ENCODE measurements at regions of chr17 and their contacts with region 1.

Region 1: GRCh38 chr17:43927060-43927864 is 15.0 kb downstream of the PPY start:
- DNase-seq: peak; percentile 28
- H3K4me3 Mint-ChIP-seq: peak overlapping the region; percentile 64
- H3K27ac Mint-ChIP-seq: peak overlapping the region; percentile 6
- H3K4me1 Mint-ChIP-seq: peaks cover 27% of the 10 kb centered on the region
- H3K27me3 Mint-ChIP-seq: peaks cover 50% of the 10 kb centered on the region

Region 2: DNA sequence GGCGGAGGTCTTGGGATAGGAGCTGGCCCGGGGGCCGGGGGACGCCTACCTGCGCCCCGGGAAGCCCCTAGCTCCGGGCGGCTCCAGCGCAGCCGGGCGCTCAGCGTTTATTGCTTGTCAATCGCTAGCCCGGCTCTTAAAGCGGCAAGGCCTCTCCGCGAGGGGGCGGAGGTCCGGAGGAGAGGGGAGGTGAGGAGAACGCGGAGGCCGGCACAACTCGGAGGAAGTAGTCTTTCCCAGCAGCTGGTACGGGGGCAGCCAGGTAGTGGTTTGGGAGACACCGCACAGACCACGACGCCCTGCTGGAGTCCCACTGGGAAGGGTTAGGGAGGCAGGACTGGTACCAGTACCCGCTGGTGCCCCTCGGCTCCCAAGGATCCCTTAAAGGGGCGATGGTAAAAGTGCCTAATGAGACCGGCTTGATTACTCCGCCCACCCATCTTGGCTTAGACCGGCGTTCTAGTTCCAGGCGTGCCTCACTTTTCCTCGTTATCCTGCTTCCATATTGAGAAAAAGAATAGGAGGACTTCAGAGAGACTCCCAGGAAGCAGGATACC is 19.8 kb before region 1 on chr17 and contains the start of gene MPP2:
- CTCF ChIA-PET with region 1: interaction called, 30 read pairs
- DNase-seq: peak; percentile 70
- H3K4me3 Mint-ChIP-seq: peak within 1 kb of the TSS; percentile 57
- H3K27ac Mint-ChIP-seq: no peak within 1 kb of the TSS
- H3K4me1 Mint-ChIP-seq: peaks cover 21% of the 10 kb centered on the region
- H3K27me3 Mint-ChIP-seq: peaks cover 75% of the 10 kb centered on the region

Region 3: DNA sequence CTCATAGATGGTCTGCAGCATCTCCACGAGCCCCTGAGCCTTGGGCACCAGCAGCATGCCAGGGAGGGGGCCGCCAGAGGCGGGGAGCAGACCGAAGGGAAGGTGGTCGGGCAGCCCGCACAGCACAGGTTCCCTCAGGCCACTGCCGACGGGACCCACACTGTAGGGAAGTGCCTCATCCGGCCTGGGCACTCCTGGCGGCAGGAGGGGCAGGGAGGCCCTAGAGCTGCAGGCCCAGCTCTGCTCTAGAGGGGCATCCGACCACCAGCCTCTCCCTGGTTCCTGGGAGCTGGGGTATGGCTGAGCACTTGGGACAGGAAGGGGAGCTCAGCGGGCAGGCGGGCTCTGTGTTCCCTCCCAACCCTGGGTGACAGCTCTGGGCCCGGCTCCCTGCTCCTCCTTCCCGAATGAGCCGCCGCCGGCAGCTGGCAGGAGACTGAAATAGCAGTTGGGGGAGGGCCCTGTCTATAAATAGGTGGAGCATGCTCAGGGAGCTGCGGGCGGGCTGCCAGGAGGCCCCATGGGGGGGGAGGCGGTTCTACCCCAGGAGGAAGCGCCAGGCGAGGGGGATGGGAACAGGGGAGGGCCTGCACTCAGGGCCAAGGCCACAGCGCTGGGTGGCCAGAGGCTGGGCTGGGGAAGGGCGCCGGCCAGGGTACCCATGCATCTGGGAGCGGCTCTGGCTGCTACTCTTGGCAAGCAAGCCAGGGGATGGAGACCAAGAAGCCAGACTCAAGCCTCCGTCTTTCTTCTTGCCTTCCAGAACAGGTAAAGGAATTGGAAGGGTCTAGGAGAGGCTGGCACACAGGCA is 183.8 kb after region 1 on chr17:
- CTCF ChIA-PET with region 1: no interaction called
- DNase-seq: peak; percentile 78
- H3K4me3 Mint-ChIP-seq: peak overlapping the region; percentile 21
- H3K27ac Mint-ChIP-seq: no peak overlapping the region
- H3K4me1 Mint-ChIP-seq: peaks cover 28% of the 10 kb centered on the region
- H3K27me3 Mint-ChIP-seq: no peaks in the 10 kb centered on the region

Region 4: GRCh38 chr17:44130693-44131349 is 203.6 kb after region 1 on chr17:
- CTCF ChIA-PET with region 1: no interaction called
- DNase-seq: no peak
- H3K4me3 Mint-ChIP-seq: no peak overlapping the region
- H3K27ac Mint-ChIP-seq: no peak overlapping the region
- H3K4me1 Mint-ChIP-seq: peaks cover 2% of the 10 kb centered on the region
- H3K27me3 Mint-ChIP-seq: peaks cover 26% of the 10 kb centered on the region

Region 5: GRCh38 chr17:44159519-44160210 is 232.4 kb after region 1 on chr17:
- CTCF ChIA-PET with region 1: no interaction called
- DNase-seq: no peak
- H3K4me3 Mint-ChIP-seq: no peak overlapping the region
- H3K27ac Mint-ChIP-seq: no peak overlapping the region
- H3K4me1 Mint-ChIP-seq: no peaks in the 10 kb centered on the region
- H3K27me3 Mint-ChIP-seq: no peaks in the 10 kb centered on the region